Ascending aorta (tissue), 2 donors: ENCODE measurements at regions of chr16 and their contacts with region 1.

Region 1: GRCh38 chr16:1610276-1611017 is 1.4 kb downstream of the IFT140 start:
- DNase-seq: peak; percentile 30 to 94
- H3K4me3 ChIP-seq: peak overlapping the region; percentile 63 to 83
- H3K27ac ChIP-seq: peak overlapping the region; percentile 73 to 84
- H3K4me1 ChIP-seq: peaks cover 22 to 24% of the 10 kb centered on the region in 2 donors
- H3K27me3 ChIP-seq: no peaks in the 10 kb centered on the region
- CTCF ChIP-seq: no peak

Region 2: GRCh38 chr16:1308977-1309885 is 301.2 kb before region 1 on chr16 and contains the start of gene UBE2I:
- intact Hi-C with region 1: loop called (anchors 5 kb)
- DNase-seq: peak; percentile 86 to 98
- H3K4me3 ChIP-seq: peak within 1 kb of the TSS; percentile 83 to 91
- H3K27ac ChIP-seq: peak within 1 kb of the TSS; percentile 96 to 99
- H3K4me1 ChIP-seq: peaks cover 21 to 24% of the 10 kb centered on the region in 2 donors
- H3K27me3 ChIP-seq: no peaks in the 10 kb centered on the region
- CTCF ChIP-seq: no peak
- total RNA-seq, gene UBE2I: 141 TPM

Region 3: GRCh38 chr16:1428511-1428910 is 181.9 kb before region 1 on chr16:
- intact Hi-C with region 1: no loop called
- DNase-seq: no peak
- H3K4me3 ChIP-seq: no peak overlapping the region
- H3K27ac ChIP-seq: no peak overlapping the region
- H3K4me1 ChIP-seq: no peaks in the 10 kb centered on the region
- H3K27me3 ChIP-seq: no peaks in the 10 kb centered on the region
- CTCF ChIP-seq: no peak

Region 4: DNA sequence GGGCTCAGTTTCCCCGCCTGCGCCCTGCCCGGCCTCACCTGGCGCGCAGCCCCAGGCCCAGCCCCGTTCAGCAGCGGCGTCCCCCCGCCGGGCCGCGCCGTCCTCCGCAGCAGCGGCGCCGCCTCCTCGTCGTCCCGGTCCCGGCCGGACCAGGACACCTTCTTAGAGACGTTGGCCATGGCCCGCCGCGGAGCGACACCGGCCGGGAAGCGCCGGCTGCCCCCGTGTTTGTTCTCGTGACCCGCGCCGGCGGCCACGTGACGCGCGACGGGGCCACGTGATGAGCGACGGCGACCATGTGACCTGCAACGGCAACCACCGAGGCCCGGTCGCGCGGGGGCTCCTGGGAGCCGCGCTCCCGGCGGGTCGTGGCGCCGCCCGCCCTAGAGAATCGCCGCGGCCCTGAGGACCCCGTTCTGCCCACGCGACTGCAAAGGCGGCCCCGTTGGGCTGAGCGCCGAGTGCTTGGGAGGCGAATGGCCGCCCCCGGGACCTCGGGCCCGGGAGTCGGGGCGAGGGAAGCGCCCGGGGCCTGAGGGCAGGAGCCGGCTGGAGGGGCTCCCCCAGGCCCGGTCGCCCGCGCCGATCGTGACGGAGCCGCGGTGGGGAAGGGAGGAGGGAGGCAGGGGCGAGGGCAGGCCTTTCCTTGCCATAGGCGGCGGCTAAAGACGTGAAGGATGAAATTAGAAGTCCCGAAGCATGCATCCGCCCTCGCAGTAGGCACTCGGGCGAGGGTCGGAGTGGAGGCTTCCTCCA is 135.5 kb before region 1 on chr16 and contains the start of gene CLCN7:
- intact Hi-C with region 1: loop called (anchors 2 kb)
- DNase-seq: peak; percentile 62 to 94
- H3K4me3 ChIP-seq: peak within 1 kb of the TSS; percentile 88 to 89
- H3K27ac ChIP-seq: peak within 1 kb of the TSS; percentile 83 to 86
- H3K4me1 ChIP-seq: peaks cover 0 to 18% of the 10 kb centered on the region in 2 donors
- H3K27me3 ChIP-seq: no peaks in the 10 kb centered on the region
- CTCF ChIP-seq: no peak
- total RNA-seq, gene CLCN7: 108 TPM

Region 5: DNA sequence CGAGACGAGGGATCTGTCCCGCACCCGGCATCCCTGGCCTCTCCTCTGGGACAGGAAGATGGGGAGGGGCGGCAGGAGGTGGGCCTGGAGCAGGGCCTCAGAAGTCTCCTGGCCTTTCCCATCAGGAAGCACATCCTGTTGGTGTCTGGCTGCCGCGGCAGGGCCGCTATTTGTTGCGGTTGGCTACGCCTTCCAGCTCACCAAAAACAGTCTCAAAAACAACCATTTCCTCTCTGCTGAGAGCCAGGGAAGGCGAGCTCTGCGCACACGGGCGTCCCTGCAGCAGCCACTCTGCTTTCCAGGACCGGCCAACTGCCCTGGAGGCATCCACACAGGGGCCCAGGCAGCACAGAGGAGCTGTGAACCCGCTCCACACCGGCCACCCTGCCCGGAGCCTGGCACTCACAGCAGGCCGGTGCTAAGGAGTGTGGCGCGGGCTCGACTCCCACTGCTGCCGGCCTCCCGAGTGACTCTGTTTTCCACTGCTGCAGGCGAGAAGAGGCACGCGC is 77.0 kb before region 1 on chr16 and contains the start of gene TMEM204:
- intact Hi-C with region 1: loop called (anchors 5 kb)
- DNase-seq: peak in 1 of 2 donors; percentile 86
- H3K4me3 ChIP-seq: peak within 1 kb of the TSS; percentile 68 to 80
- H3K27ac ChIP-seq: peak within 1 kb of the TSS; percentile 90 to 98
- H3K4me1 ChIP-seq: peaks cover 17 to 54% of the 10 kb centered on the region in 2 donors
- H3K27me3 ChIP-seq: no peaks in the 10 kb centered on the region
- CTCF ChIP-seq: no peak
- total RNA-seq, gene TMEM204: 145 TPM

Region 6: DNA sequence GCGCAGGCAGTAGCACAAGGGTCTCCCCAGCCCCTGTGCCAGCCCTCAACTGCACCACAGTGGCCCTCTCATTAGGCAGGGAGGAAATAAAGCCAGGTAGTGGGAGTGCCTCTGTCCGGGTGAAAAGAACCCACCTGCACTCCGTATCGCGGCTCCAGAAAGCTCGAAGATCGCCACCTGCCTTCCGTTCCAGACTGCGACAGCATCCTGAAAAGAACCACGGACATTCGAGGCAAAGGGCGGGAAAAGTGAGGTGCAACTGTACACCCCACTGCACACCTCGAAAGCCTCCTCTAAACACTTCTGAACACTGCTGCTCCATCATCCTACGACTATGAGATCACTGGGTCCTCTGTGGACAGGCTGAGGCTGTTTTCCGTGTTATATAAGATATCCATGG is 27.3 kb before region 1 on chr16:
- intact Hi-C with region 1: no loop called
- DNase-seq: no peak
- H3K4me3 ChIP-seq: no peak overlapping the region
- H3K27ac ChIP-seq: no peak overlapping the region
- H3K4me1 ChIP-seq: no peaks in the 10 kb centered on the region
- H3K27me3 ChIP-seq: no peaks in the 10 kb centered on the region
- CTCF ChIP-seq: no peak

Region 7: GRCh38 chr16:1642148-1642547 is 31.7 kb after region 1 on chr16:
- intact Hi-C with region 1: no loop called
- DNase-seq: no peak
- H3K4me3 ChIP-seq: no peak overlapping the region
- H3K27ac ChIP-seq: no peak overlapping the region
- H3K4me1 ChIP-seq: no peaks in the 10 kb centered on the region
- H3K27me3 ChIP-seq: no peaks in the 10 kb centered on the region
- CTCF ChIP-seq: no peak

Region 8: DNA sequence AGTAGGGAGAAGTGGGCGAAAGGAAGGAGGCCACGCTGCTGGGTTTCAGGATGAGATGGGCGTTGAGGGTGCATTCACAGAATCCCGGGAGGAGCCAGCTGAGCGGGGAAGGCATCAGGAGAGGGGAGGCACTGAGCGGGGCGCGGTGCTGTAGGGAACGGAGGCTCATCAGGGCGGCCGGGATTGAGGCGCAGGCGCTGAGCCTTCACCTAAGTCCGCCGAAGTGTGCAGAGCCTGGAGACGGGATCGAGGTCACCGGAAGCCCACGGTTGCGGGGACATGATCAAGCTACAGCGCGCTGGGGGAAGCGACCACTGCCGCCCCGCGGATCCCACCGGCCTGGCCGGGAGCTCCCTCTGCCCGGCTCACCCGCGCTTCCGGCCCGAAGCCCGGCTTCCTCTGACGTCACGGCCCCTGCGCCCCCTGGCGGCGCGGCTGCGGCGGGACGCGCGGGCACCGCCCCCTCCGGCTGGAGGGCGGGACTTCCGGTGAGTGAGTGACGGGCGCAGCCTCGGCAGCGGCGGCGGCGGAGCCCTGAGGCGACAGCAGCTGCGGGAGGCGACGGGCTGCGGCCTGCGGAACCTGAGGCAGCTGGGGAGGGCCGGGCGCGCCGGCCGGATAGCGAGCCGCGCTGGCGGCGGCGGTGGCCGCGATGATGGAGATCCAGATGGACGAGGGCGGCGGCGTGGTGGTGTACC is 95.4 kb after region 1 on chr16 and contains the start of gene MAPK8IP3:
- intact Hi-C with region 1: loop called (anchors 1 kb)
- DNase-seq: peak; percentile 54 to 94
- H3K4me3 ChIP-seq: peak within 1 kb of the TSS; percentile 70 to 89
- H3K27ac ChIP-seq: peak within 1 kb of the TSS; percentile 85 to 95
- H3K4me1 ChIP-seq: peaks cover 0 to 22% of the 10 kb centered on the region in 2 donors
- H3K27me3 ChIP-seq: no peaks in the 10 kb centered on the region
- CTCF ChIP-seq: peak; percentile 64 to 100 (median 76)
- total RNA-seq, gene MAPK8IP3: 57.4 TPM

Region 9: DNA sequence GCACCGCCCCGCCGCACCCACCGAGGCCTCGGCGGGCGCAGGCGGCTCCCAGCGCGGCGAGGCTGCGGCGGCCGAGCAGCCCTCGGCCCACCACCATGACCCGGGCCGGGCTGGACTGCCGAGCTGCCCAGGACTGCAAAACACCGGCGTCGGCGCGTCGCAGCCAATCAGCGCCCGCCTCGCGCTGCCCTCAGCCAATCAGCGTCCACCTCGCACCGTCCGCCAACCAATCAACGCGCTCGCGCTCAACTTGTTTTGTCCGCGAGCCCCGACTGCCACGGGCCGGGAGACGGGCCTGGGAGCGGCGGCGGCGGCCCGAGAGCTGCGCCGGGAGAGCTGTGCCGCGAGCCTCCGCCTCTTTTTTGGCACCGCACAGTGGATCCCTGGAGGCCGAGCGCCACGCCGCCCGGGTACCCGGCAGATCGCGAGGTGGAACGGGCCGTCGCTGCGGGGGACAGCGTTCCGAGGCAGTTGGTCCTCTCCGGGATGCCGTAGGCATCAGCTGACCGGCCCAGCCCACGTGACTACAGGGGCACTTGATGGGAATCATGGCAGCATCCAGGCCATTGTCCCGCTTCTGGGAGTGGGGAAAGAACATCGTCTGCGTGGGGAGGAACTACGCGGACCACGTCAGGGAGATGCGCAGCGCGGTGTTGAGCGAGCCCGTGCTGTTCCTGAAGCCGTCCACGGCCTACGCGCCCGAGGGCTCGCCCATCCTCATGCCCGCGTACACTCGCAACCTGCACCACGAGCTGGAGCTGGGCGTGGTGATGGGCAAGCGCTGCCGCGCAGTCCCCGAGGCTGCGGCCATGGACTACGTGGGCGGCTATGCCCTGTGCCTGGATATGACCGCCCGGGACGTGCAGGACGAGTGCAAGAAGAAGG is 216.5 kb after region 1 on chr16 and contains the starts of genes FAHD1 and HAGH:
- intact Hi-C with region 1: loop called (anchors 5 kb)
- DNase-seq: peak; percentile 73 to 94
- H3K4me3 ChIP-seq: peak within 1 kb of the TSS; percentile 72 to 81
- H3K27ac ChIP-seq: peak within 1 kb of the TSS; percentile 70 to 72
- H3K4me1 ChIP-seq: peaks cover 12 to 37% of the 10 kb centered on the region in 2 donors
- H3K27me3 ChIP-seq: no peaks in the 10 kb centered on the region
- CTCF ChIP-seq: no peak
- total RNA-seq, gene FAHD1: 233 TPM
- total RNA-seq, gene HAGH: 177 TPM

Region 10: GRCh38 chr16:3023669-3024478 is 1413.4 kb after region 1 on chr16 and contains the starts of genes HCFC1R1 and THOC6:
- intact Hi-C with region 1: loop called (anchors 5 kb)
- DNase-seq: peak; percentile 91 to 99
- H3K4me3 ChIP-seq: peak within 1 kb of the TSS; percentile 93 to 95
- H3K27ac ChIP-seq: peak within 1 kb of the TSS; percentile 98 to 100
- H3K4me1 ChIP-seq: peaks cover 9 to 30% of the 10 kb centered on the region in 2 donors
- H3K27me3 ChIP-seq: no peaks in the 10 kb centered on the region
- CTCF ChIP-seq: no peak
- total RNA-seq, gene HCFC1R1: 50.8 TPM
- total RNA-seq, gene THOC6: 32.6 TPM